ENCODE measurements at regions of chr20 and their contacts with region 1.

Region 1: DNA sequence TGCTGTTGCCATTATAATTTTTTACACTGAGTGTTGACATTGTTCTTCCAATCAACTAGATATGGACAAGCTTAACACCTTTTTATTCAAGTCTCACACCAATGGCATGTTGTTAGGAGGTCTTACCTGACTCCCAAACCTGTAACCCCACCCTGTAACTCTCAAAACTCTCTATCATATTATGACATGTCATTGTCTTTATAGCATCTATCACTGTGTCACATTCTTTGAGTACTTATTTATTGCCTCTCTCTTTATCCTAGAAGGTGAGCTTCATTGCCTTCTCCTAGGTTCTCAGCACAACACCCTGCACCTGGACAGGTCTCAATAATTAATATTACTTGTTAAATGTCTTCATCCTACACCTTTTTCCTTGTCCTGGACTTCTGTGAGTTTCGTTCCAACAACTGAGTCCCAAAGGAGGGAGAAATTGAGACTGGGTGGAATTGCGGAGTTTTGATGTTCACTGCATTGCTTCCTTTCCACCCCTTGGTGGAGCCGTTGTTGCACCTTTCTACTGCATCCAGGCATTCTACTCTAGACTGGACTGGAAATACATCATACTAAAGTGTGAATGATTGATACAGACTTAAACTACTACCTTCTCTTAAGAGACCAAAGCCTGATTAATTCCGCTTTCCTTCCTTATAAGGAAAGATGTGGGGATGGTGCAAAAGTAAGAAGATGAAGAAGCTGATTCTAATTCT is 338.0 kb upstream of the CHD6 start:
- DNase-seq: no peak
- H3K4me3 Mint-ChIP-seq: no peak overlapping the region
- H3K27ac Mint-ChIP-seq: no peak overlapping the region
- H3K4me1 Mint-ChIP-seq: peaks cover 2% of the 10 kb centered on the region
- H3K27me3 Mint-ChIP-seq: peaks cover 7% of the 10 kb centered on the region

Region 2: GRCh38 chr20:43187476-43188233 is 1231.5 kb after region 1 on chr20:
- intact Hi-C with region 1: loop called (anchors 10 kb)
- DNase-seq: peak; percentile 53
- H3K4me3 Mint-ChIP-seq: no peak overlapping the region
- H3K27ac Mint-ChIP-seq: no peak overlapping the region
- H3K4me1 Mint-ChIP-seq: peaks cover 2% of the 10 kb centered on the region
- H3K27me3 Mint-ChIP-seq: peaks cover 34% of the 10 kb centered on the region